ENCODE measurements at regions of chr17 and their contacts with region 1.

Region 1: DNA sequence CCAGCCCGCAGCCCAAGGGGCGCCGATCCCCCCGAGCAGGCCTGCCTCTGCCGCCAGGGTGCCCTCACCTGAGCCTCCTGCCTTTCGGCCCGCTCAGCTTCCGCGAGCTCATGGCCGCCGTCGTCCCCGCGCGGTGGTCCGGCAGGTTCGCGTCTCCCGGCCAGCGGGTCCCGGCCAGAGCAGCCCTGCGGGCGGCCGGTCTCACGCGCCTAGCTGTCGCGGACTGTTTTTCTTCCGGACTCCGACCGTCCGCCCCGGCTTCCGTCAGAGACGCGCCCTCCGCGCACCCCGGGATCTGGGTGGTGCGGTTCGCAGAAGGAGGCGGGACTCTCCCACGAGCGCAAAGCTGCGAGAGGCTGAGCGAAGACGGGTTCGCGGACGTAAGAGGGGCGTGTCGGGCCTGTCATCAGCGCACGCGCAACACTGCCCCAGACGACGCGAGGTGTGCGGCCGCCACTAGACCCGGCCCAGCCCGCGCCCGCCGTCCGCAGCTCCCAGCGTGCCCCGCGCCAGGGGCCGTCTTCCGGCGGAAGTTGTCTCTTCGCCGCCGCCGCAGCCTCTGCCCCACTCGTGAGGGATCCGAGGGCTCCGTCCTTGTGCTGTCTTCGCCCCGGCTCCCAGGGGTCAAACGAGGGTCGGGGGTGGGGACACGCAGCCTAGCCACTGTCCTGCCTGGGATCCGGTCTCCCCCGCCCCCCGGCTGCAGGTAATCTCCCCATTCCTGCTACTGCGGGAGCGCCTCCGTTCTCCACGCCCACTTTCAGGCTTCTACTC is at the start of gene INPP5K:
- DNase-seq: peak; percentile 93
- ATAC-seq: peak; percentile 94
- H3K4me3 ChIP-seq: peak within 1 kb of the TSS; percentile 96 to 100 (median 97)
- H3K27ac ChIP-seq: peak within 1 kb of the TSS; percentile 73
- H3K4me1 ChIP-seq: peaks cover 17% of the 10 kb centered on the region
- H3K27me3 ChIP-seq: no peaks in the 10 kb centered on the region; a peak in 1 of 5 replicates
- CTCF ChIP-seq: no peak
- EP300 ChIP-seq: no peak
- POLR2A ChIP-seq: peak; percentile 72 to 92
- RAD21 ChIP-seq: peak; percentile 11; the same call in 1 of the 2 replicates
- total RNA-seq, gene INPP5K: 4.3 and 4.8 TPM in 2 replicates

Region 2: GRCh38 chr17:1275962-1276736 is 240.4 kb before region 1 on chr17:
- CTCF ChIA-PET with region 1: no interaction called
- POLR2A ChIA-PET with region 1: no interaction called
- in situ Hi-C with region 1: loop called (anchors 10 kb)
- intact Hi-C with region 1: no loop called
- DNase-seq: peak; percentile 29
- ATAC-seq: peak; percentile 75
- H3K4me3 ChIP-seq: no peak overlapping the region
- H3K27ac ChIP-seq: no peak overlapping the region
- H3K4me1 ChIP-seq: no peaks in the 10 kb centered on the region
- H3K27me3 ChIP-seq: peaks cover 20 to 67% of the 10 kb centered on the region in 2 experiments
- CTCF ChIP-seq: peak; percentile 83
- EP300 ChIP-seq: no peak
- POLR2A ChIP-seq: no peak
- RAD21 ChIP-seq: peak; percentile 76

Region 3: DNA sequence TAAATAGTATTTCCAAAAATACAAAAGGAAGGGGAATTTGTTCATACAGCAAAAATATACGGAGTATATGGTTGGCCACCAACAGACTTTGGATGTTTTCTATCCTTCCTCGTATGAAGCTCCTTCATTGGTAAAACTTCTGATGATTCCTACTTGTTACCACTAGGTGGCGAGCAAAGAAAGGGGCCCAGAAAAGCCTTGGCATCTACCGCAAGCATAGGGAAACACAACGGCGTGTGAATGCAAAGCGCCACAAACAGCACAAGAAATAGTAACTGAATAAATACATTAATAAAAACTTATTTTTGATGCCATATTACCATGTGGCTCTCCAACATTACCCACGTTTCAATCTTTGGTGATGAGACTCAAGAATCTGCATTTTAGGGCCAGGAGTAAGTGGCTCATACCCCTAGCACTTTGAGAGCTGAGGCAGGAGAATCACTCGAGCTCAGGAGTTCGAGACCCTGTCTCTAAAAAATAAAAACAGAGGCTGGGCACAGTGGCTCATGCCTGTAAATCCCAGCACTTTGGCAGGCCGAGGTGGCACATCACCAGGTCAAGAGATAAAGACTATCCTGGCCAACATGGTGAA is 151.0 kb before region 1 on chr17:
- CTCF ChIA-PET with region 1: interaction called, 9 read pairs
- POLR2A ChIA-PET with region 1: interaction called, 17 read pairs
- in situ Hi-C with region 1: loop called (anchors 5 kb)
- intact Hi-C with region 1: loop called (anchors 1 kb)
- DNase-seq: peak; percentile 70
- ATAC-seq: peak; percentile 83
- H3K4me3 ChIP-seq: no peak overlapping the region
- H3K27ac ChIP-seq: no peak overlapping the region
- H3K4me1 ChIP-seq: peaks cover 19% of the 10 kb centered on the region
- H3K27me3 ChIP-seq: no peaks in the 10 kb centered on the region
- CTCF ChIP-seq: peak; percentile 86
- EP300 ChIP-seq: no peak
- POLR2A ChIP-seq: no peak
- RAD21 ChIP-seq: peak; percentile 64

Region 4: GRCh38 chr17:1399679-1400512 is 116.7 kb before region 1 on chr17 and contains the start of gene YWHAE:
- CTCF ChIA-PET with region 1: no interaction called
- POLR2A ChIA-PET with region 1: interaction called, 12 read pairs
- in situ Hi-C with region 1: no loop called
- intact Hi-C with region 1: no loop called
- DNase-seq: peak; percentile 89
- ATAC-seq: peak; percentile 93
- H3K4me3 ChIP-seq: peak within 1 kb of the TSS; percentile 88 to 100 (median 90)
- H3K27ac ChIP-seq: peak within 1 kb of the TSS; percentile 98
- H3K4me1 ChIP-seq: peaks cover 58% of the 10 kb centered on the region
- H3K27me3 ChIP-seq: no peaks in the 10 kb centered on the region; a peak in 2 of 5 replicates
- CTCF ChIP-seq: no peak
- EP300 ChIP-seq: no peak
- POLR2A ChIP-seq: peak; percentile 90 to 96
- RAD21 ChIP-seq: peak; percentile 54
- total RNA-seq, gene YWHAE: 256 and 504 TPM in 2 replicates

Region 5: DNA sequence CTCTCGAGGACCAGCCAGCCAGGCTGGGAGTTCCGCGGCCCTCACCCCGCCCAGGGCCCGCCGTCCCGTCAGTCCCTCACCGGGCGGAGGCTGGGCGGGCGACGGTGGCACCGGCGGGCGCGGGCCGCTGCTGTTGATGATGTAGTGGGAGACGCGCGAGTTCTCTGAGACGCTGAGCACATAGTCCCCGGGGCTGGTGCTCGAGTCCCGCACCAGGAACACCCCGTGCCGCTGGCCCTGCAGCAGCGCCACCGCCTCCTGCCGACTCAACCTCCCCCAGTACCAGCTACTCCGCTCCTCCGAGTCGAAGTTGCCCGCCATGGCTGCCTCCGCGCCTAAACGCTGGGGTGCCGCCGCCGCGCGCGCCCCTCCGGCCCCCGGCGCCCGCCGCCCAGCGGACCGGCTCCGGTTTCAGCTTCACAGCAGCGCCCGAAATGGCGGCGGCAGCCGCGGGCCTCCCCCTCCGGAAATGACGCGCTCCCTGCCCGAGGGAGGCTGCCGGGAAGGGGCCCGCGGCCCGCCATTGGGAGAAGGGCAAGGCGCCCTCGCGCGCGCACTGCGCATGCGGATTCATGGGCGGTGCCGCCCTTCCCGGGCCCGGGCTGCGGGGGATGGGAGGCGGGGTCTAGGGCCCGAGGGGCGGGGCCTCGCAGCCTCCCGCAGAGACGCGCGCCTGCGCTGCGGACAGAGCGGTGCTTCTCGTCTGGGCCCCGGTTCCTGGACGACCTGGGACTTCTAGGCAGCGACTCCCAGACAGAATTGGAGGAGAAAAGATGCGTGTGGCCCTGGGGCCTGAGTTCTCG is 60.6 kb before region 1 on chr17 and contains the start of gene CRK:
- CTCF ChIA-PET with region 1: interaction called, 7 read pairs
- POLR2A ChIA-PET with region 1: interaction called, 21 read pairs
- in situ Hi-C with region 1: no loop called
- intact Hi-C with region 1: loop called (anchors 1 kb)
- DNase-seq: peak; percentile 89
- ATAC-seq: peak; percentile 81
- H3K4me3 ChIP-seq: peak within 1 kb of the TSS; percentile 89 to 99 (median 98)
- H3K27ac ChIP-seq: peak within 1 kb of the TSS; percentile 99
- H3K4me1 ChIP-seq: peaks cover 50% of the 10 kb centered on the region
- H3K27me3 ChIP-seq: no peaks in the 10 kb centered on the region; a peak in 1 of 5 replicates
- CTCF ChIP-seq: no peak; the same call in 1 of the 2 replicates
- EP300 ChIP-seq: no peak
- POLR2A ChIP-seq: peak; percentile 86 to 93
- RAD21 ChIP-seq: peak; percentile 48
- total RNA-seq, gene CRK: 54.2 and 66.2 TPM in 2 replicates

Region 6: GRCh38 chr17:1488030-1488863 is 28.3 kb before region 1 on chr17:
- CTCF ChIA-PET with region 1: no interaction called
- POLR2A ChIA-PET with region 1: interaction called, 19 read pairs
- in situ Hi-C with region 1: no loop called
- intact Hi-C with region 1: loop called (anchors 1 kb)
- DNase-seq: peak; percentile 70
- ATAC-seq: peak; percentile 33
- H3K4me3 ChIP-seq: peak overlapping the region; percentile 47 to 70 (median 70)
- H3K27ac ChIP-seq: peak overlapping the region; percentile 74
- H3K4me1 ChIP-seq: peaks cover 56% of the 10 kb centered on the region
- H3K27me3 ChIP-seq: no peaks in the 10 kb centered on the region; a peak in 1 of 5 replicates
- CTCF ChIP-seq: peak; percentile 19; the same call in 1 of the 2 replicates
- EP300 ChIP-seq: no peak
- POLR2A ChIP-seq: peak; percentile 62 to 69; a peak in 3 of 4 replicates
- RAD21 ChIP-seq: peak; percentile 29; the same call in 1 of the 2 replicates

Region 7: DNA sequence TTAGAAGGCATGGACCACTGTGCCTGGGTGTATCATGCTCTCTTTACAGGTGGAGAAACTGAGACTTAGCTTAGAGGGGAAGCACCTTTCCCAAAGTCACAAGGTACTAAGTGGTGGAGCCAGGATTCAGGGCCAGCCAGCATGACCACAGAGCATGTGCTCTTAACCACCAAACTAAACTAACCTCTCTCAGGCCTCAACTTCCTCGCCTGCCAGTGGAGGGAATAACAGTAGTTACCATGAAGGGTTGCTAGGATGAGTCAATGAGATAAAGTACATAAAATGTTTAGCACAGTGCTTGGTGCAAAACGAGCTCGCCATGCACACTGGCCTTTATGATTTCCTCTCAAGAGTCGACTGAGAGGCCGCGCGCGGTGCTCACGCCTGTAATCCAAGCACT is 17.7 kb before region 1 on chr17:
- CTCF ChIA-PET with region 1: no interaction called
- POLR2A ChIA-PET with region 1: no interaction called
- in situ Hi-C with region 1: no loop called
- intact Hi-C with region 1: no loop called
- DNase-seq: no peak
- ATAC-seq: no peak
- H3K4me3 ChIP-seq: no peak overlapping the region
- H3K27ac ChIP-seq: no peak overlapping the region
- H3K4me1 ChIP-seq: no peaks in the 10 kb centered on the region
- H3K27me3 ChIP-seq: no peaks in the 10 kb centered on the region; a peak in 1 of 5 replicates
- CTCF ChIP-seq: no peak
- EP300 ChIP-seq: no peak
- POLR2A ChIP-seq: no peak
- RAD21 ChIP-seq: no peak

Region 8: DNA sequence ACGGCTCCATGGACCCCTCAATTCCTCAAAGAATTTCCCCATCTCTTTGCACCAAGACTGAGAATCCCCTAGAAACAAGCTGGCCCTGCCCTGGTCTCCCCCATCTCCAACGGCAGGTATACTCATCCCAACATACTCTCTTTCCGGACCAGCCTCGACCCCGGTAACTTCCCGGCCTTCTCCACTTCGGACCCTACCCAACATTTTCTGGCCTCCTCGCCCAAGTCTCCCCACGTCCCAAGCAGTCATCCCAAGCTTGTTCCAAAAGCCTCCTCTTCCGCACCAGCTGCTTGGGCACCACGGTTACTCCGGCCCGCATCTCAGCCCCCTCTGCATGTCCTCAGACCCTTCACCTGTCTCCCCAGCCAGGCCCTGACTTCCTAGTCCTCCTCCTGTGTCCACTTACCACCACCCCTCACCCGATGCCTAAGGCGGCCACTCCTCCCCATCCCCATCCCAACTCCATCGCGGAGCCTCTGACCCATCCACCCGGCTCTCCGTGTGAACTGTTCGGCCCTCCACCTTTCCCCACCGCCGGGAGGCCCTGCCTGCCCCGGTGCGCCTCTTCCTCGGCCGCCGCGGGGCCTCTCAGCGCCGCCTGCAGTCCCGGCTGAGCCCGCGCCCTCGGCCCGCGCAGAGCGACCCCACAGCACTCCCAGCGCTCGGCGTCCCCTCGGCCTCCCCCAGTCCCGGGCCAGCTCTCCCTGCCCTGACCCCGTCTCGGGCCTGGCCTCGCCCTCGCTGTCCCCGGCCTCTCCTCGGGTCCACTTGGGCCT is 45.0 kb after region 1 on chr17:
- CTCF ChIA-PET with region 1: no interaction called
- POLR2A ChIA-PET with region 1: interaction called, 12 read pairs
- in situ Hi-C with region 1: no loop called
- intact Hi-C with region 1: loop called (anchors 5 kb)
- DNase-seq: no peak
- ATAC-seq: peak; percentile 68
- H3K4me3 ChIP-seq: peak overlapping the region; percentile 79 to 91 (median 91)
- H3K27ac ChIP-seq: peak overlapping the region; percentile 54
- H3K4me1 ChIP-seq: peaks cover 47% of the 10 kb centered on the region
- H3K27me3 ChIP-seq: 0 out of 5 replicates have a peak, but pooled peaks cover 0 to 7% of the 10 kb centered on the region in 2 experiments
- CTCF ChIP-seq: peak; percentile 51
- EP300 ChIP-seq: no peak
- POLR2A ChIP-seq: no peak
- RAD21 ChIP-seq: peak; percentile 52